ENCODE measurements at regions of chr3 and their contacts with region 1.

Region 1: GRCh38 chr3:112111785-112112402 is 21.2 kb downstream of the GCSAM start:
- DNase-seq: peak; percentile 40 to 86 (median 54)
- ATAC-seq: peak; percentile 98
- H3K4me3 ChIP-seq: no peak overlapping the region
- H3K4me3 Mint-ChIP-seq: no peak overlapping the region
- H3K27ac ChIP-seq: no peak overlapping the region
- H3K27ac Mint-ChIP-seq: no peak overlapping the region
- H3K4me1 ChIP-seq: peaks cover 4% of the 10 kb centered on the region
- H3K4me1 Mint-ChIP-seq: peaks cover 14% of the 10 kb centered on the region
- H3K27me3 ChIP-seq: no peaks in the 10 kb centered on the region
- H3K27me3 Mint-ChIP-seq: no peaks in the 10 kb centered on the region
- CTCF ChIP-seq: peak; percentile 91

Region 2: DNA sequence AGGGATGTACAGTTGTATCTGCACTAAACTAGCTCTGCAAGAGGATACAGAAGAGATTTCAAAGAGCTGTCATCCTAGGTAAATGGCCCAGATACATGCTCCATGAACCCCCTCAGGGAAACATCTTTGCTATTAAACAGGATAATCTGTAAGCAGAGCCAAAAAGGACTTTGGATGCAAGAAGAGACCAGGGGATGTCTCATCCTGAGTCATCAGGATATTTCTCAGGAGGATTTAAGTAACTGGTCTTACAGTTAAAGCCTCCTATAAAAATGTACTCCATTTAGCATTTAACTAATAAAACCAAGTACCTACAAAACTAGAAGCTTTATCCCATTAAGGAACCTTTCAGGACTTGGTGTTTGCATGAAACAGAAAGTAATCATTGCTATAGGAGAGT is 301.0 kb before region 1 on chr3:
- CTCF ChIA-PET with region 1: no interaction called
- POLR2A ChIA-PET with region 1: no interaction called
- intact Hi-C with region 1: no loop called
- DNase-seq: no peak
- ATAC-seq: no peak
- H3K4me3 ChIP-seq: no peak overlapping the region
- H3K4me3 Mint-ChIP-seq: no peak overlapping the region
- H3K27ac ChIP-seq: no peak overlapping the region
- H3K27ac Mint-ChIP-seq: no peak overlapping the region
- H3K4me1 ChIP-seq: no peaks in the 10 kb centered on the region
- H3K4me1 Mint-ChIP-seq: no peaks in the 10 kb centered on the region
- H3K27me3 ChIP-seq: no peaks in the 10 kb centered on the region
- H3K27me3 Mint-ChIP-seq: no peaks in the 10 kb centered on the region
- CTCF ChIP-seq: no peak

Region 3: GRCh38 chr3:112136959-112137693 is 25.2 kb after region 1 on chr3:
- CTCF ChIA-PET with region 1: interaction called, 9 read pairs
- POLR2A ChIA-PET with region 1: interaction called, 5 read pairs
- intact Hi-C with region 1: loop called in 1 of 2 experiments (anchors 2 kb)
- DNase-seq: peak in 11 of 14 experiments; percentile 19 to 75 (median 30)
- ATAC-seq: no peak
- H3K4me3 ChIP-seq: no peak overlapping the region
- H3K4me3 Mint-ChIP-seq: no peak overlapping the region
- H3K27ac ChIP-seq: no peak overlapping the region
- H3K27ac Mint-ChIP-seq: peak overlapping the region; percentile 27
- H3K4me1 ChIP-seq: peaks cover 36% of the 10 kb centered on the region
- H3K4me1 Mint-ChIP-seq: peaks cover 60% of the 10 kb centered on the region
- H3K27me3 ChIP-seq: no peaks in the 10 kb centered on the region
- H3K27me3 Mint-ChIP-seq: no peaks in the 10 kb centered on the region
- CTCF ChIP-seq: peak; percentile 68

Region 4: GRCh38 chr3:112253301-112253971 is 141.5 kb after region 1 on chr3:
- CTCF ChIA-PET with region 1: no interaction called
- POLR2A ChIA-PET with region 1: no interaction called
- intact Hi-C with region 1: no loop called
- DNase-seq: no peak
- ATAC-seq: no peak
- H3K4me3 ChIP-seq: no peak overlapping the region
- H3K4me3 Mint-ChIP-seq: no peak overlapping the region
- H3K27ac ChIP-seq: no peak overlapping the region
- H3K27ac Mint-ChIP-seq: no peak overlapping the region
- H3K4me1 ChIP-seq: no peaks in the 10 kb centered on the region
- H3K4me1 Mint-ChIP-seq: no peaks in the 10 kb centered on the region
- H3K27me3 ChIP-seq: peaks cover 0 to 6% of the 10 kb centered on the region in 2 experiments
- H3K27me3 Mint-ChIP-seq: peaks cover 4% of the 10 kb centered on the region
- CTCF ChIP-seq: no peak

Region 5: GRCh38 chr3:112303764-112304325 is 192.0 kb after region 1 on chr3:
- CTCF ChIA-PET with region 1: no interaction called
- POLR2A ChIA-PET with region 1: interaction called, 3 read pairs
- intact Hi-C with region 1: loop called in 1 of 2 experiments (anchors 2 kb)
- DNase-seq: peak in 8 of 14 experiments; percentile 8 to 52 (median 23)
- ATAC-seq: peak; percentile 83
- H3K4me3 ChIP-seq: peak overlapping the region; percentile 60
- H3K4me3 Mint-ChIP-seq: no peak overlapping the region
- H3K27ac ChIP-seq: no peak overlapping the region
- H3K27ac Mint-ChIP-seq: no peak overlapping the region
- H3K4me1 ChIP-seq: peaks cover 22% of the 10 kb centered on the region
- H3K4me1 Mint-ChIP-seq: peaks cover 1% of the 10 kb centered on the region
- H3K27me3 ChIP-seq: no peaks in the 10 kb centered on the region
- H3K27me3 Mint-ChIP-seq: no peaks in the 10 kb centered on the region
- CTCF ChIP-seq: no peak

Region 6: DNA sequence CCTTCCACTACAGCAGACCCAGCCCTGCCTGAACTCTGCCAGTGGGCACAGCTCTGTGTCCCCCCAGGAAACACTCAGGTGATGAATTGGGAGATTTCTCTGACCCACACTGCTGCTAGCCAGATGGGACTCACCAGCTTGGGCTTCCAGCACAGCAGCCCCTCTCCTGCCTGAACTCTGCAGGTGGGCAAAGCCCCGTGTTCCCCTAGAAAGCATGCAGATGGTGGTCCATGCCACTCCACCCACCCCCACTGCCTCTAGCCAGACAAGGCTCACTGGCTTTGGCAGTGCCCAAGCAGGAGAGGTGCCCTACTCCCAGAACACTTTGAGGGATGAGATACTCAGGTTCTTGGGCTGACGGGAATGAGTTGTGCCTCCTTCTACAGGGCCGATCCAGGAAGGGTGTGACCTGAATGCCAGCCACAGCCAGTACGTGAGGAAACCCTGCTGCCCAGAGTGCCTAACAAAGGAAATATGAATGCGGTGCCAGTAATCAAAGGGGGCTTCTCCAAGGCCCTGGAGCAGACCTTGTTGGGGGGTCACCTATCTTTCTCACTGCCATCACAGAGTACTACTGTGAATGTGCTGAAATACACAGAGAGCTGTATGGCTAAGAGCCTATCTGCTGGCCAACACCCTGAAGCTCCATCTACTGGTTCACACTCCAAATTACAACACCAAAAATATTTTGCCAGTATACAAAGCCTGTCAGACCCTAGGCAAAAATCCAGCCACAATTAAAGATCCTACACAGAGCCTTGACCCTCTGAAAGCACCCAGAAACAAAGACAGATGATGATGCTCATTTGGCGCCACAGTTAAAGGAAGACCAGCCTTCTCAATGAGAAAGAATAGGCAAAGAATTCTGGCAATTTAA is 325.5 kb after region 1 on chr3:
- CTCF ChIA-PET with region 1: no interaction called
- POLR2A ChIA-PET with region 1: interaction called, 3 read pairs
- intact Hi-C with region 1: loop called in 1 of 2 experiments (anchors 2 kb)
- DNase-seq: peak in 3 of 14 experiments; percentile 49 to 56 (median 55)
- ATAC-seq: peak; percentile 72
- H3K4me3 ChIP-seq: no peak overlapping the region
- H3K4me3 Mint-ChIP-seq: peak overlapping the region; percentile 50
- H3K27ac ChIP-seq: no peak overlapping the region
- H3K27ac Mint-ChIP-seq: no peak overlapping the region
- H3K4me1 ChIP-seq: peaks cover 10% of the 10 kb centered on the region
- H3K4me1 Mint-ChIP-seq: peaks cover 17% of the 10 kb centered on the region
- H3K27me3 ChIP-seq: no peaks in the 10 kb centered on the region
- H3K27me3 Mint-ChIP-seq: no peaks in the 10 kb centered on the region
- CTCF ChIP-seq: peak; percentile 42

Region 7: DNA sequence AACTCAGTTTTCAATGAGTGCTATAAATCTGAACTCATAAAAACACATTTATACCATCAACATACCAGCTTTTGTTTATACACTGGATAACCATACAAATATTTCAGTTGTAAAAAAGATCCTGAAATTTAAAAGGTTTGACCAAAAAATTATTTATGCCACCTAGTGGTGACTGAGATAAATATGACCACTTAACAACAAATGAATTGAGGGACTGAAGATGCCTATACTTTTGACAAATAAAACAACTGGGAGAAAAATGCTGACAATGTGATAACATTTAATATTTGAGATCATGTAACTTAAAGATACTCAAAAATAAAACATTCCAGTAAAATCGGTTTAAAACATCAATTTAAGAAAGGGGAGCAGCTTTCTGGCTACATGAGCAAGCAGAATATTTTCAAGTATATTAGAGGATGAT is 419.5 kb after region 1 on chr3:
- CTCF ChIA-PET with region 1: no interaction called
- POLR2A ChIA-PET with region 1: no interaction called
- intact Hi-C with region 1: loop called (anchors 1 to 2 kb)
- DNase-seq: peak in 3 of 14 experiments; percentile 47 to 60 (median 55)
- ATAC-seq: no peak
- H3K4me3 ChIP-seq: no peak overlapping the region
- H3K4me3 Mint-ChIP-seq: no peak overlapping the region
- H3K27ac ChIP-seq: no peak overlapping the region
- H3K27ac Mint-ChIP-seq: peak overlapping the region; percentile 6
- H3K4me1 ChIP-seq: no peaks in the 10 kb centered on the region
- H3K4me1 Mint-ChIP-seq: no peaks in the 10 kb centered on the region
- H3K27me3 ChIP-seq: no peaks in the 10 kb centered on the region
- H3K27me3 Mint-ChIP-seq: no peaks in the 10 kb centered on the region
- CTCF ChIP-seq: peak; percentile 80

Region 8: GRCh38 chr3:112873632-112874031 is 761.7 kb after region 1 on chr3:
- CTCF ChIA-PET with region 1: no interaction called
- POLR2A ChIA-PET with region 1: no interaction called
- intact Hi-C with region 1: no loop called
- DNase-seq: no peak
- ATAC-seq: no peak
- H3K4me3 ChIP-seq: no peak overlapping the region
- H3K4me3 Mint-ChIP-seq: no peak overlapping the region
- H3K27ac ChIP-seq: no peak overlapping the region
- H3K27ac Mint-ChIP-seq: no peak overlapping the region
- H3K4me1 ChIP-seq: no peaks in the 10 kb centered on the region
- H3K4me1 Mint-ChIP-seq: no peaks in the 10 kb centered on the region
- H3K27me3 ChIP-seq: no peaks in the 10 kb centered on the region
- H3K27me3 Mint-ChIP-seq: no peaks in the 10 kb centered on the region
- CTCF ChIP-seq: no peak